Activated CD4-positive, alpha-beta memory T cell treated with anti-CD3 and anti-CD28 coated beads for 36 hours (primary cell): ENCODE measurements at regions of chr2 and their contacts with region 1.

Region 1: DNA sequence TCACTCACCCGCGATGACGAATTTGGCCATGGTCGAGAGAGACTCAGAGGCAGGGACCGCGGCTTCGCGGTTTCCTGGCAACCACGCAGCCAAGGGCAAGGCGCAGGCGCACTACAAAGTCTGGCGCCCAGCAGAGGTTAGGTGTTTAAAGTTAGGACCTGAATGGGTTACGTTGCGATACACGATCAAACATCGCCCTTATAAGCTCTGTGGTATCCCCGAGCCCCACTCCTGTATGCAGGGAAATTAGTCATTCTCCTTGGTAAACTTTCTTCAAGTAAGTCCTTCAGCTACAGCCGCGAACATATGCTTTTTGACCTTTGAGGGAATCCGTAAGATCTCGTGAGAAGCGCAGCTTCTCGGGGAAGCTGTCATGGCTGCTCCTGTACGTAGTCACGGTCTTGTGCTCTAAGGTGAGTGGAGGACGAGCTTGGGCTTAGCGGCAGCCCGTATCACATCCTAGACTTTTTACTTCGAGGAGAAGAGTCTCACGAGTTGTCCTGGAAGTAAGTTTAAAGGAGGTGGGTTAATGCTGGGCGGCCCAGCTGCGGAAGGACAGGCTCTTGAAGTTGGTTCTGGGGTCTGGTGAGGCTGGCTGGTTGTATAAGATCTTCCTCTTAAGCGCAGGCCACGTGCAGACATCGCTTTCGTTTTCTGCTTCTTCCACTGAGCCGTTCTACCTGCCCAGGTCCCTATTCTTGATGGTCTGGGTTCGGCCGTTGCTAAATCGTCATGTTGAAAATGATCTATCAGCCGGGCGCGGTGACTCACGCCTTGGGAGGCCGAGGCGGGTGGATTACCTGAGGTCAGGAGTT is at the starts of genes FASTKD2 and MDH1B:
- DNase-seq: peak; percentile 94
- H3K4me3 Mint-ChIP-seq: peak within 1 kb of the TSS; percentile 93
- H3K27ac Mint-ChIP-seq: peak within 1 kb of the TSS; percentile 96
- H3K4me1 Mint-ChIP-seq: peaks cover 31% of the 10 kb centered on the region
- H3K27me3 Mint-ChIP-seq: no peaks in the 10 kb centered on the region
- total RNA-seq, gene FASTKD2: 31.3 to 32.0 TPM
- total RNA-seq, gene MDH1B: 0.74 to 0.87 TPM

Region 2: DNA sequence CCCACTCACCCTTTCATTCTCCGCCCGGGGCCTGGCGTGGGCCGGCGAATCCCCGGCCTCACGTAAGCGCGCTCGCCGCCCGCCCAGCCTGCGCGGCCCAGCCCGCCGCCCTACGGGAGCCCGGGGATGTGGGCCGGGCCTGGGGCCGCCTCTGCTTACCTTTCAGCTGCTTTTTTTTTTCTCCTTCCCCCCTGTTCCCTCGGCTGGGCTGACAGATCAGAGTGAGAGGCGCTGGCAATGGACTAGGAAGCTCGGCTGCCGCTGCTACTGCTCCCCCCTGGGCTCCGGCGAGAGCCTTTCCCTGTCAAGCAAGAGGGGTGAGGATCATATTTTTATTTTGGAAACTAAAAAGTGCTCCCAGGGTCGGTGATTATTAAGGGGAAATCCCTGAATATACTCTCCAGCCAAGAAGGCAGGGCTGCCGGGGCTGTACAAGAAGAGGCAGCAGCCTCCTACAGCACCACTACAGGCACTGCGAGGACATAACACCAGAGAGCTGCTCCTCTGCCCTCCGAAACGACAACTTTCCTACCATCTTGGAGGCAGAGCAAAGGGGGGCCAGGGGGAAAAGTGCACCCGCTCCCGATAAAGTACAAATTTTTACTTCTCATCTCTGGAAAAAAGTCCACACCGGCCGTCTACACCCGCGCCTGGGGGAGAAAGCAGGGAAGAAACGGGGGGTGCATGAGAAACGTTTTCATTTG is 679.6 kb before region 1 on chr2 and contains the start of gene INO80D:
- CTCF ChIA-PET with region 1: no interaction called
- POLR2A ChIA-PET with region 1: no interaction called
- intact Hi-C with region 1: loop called (anchors 5 kb)
- DNase-seq: peak; percentile 87
- H3K4me3 Mint-ChIP-seq: peak within 1 kb of the TSS; percentile 99
- H3K27ac Mint-ChIP-seq: peak within 1 kb of the TSS; percentile 100
- H3K4me1 Mint-ChIP-seq: peaks cover 14% of the 10 kb centered on the region
- H3K27me3 Mint-ChIP-seq: no peaks in the 10 kb centered on the region
- total RNA-seq, gene INO80D: 14.5 to 15.3 TPM

Region 3: GRCh38 chr2:206159346-206160124 is 605.9 kb before region 1 on chr2 and contains the starts of genes EEF1B2 and NDUFS1:
- CTCF ChIA-PET with region 1: no interaction called
- POLR2A ChIA-PET with region 1: no interaction called
- intact Hi-C with region 1: loop called (anchors 1 kb)
- DNase-seq: peak; percentile 98
- H3K4me3 Mint-ChIP-seq: peak within 1 kb of the TSS; percentile 96
- H3K27ac Mint-ChIP-seq: peak within 1 kb of the TSS; percentile 97
- H3K4me1 Mint-ChIP-seq: peaks cover 52% of the 10 kb centered on the region
- H3K27me3 Mint-ChIP-seq: no peaks in the 10 kb centered on the region
- total RNA-seq, gene EEF1B2: 1,180 to 1,194 TPM
- total RNA-seq, gene NDUFS1: 79.2 to 80.8 TPM

Region 4: DNA sequence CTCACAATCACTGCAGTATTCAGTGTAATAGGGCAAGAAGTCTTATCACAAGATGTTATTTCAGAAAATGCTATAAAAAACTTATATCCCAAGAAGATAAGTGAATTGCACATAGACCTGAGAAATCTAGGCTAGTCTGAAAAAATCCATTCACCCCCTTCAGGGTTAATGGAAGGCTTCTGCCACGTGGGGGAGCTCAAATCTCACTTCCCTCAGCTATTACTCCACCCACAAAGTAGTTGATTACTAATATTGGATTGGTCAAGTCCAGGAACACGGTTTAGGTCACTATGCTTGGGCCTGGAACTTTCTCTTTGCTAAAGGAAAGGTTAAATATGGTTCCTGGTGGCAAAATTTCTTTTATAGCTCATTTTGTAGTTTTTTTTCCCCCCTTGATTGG is 373.3 kb before region 1 on chr2:
- CTCF ChIA-PET with region 1: no interaction called
- POLR2A ChIA-PET with region 1: no interaction called
- intact Hi-C with region 1: loop called (anchors 10 kb)
- DNase-seq: peak; percentile 45
- H3K4me3 Mint-ChIP-seq: no peak overlapping the region
- H3K27ac Mint-ChIP-seq: no peak overlapping the region
- H3K4me1 Mint-ChIP-seq: no peaks in the 10 kb centered on the region
- H3K27me3 Mint-ChIP-seq: no peaks in the 10 kb centered on the region

Region 5: DNA sequence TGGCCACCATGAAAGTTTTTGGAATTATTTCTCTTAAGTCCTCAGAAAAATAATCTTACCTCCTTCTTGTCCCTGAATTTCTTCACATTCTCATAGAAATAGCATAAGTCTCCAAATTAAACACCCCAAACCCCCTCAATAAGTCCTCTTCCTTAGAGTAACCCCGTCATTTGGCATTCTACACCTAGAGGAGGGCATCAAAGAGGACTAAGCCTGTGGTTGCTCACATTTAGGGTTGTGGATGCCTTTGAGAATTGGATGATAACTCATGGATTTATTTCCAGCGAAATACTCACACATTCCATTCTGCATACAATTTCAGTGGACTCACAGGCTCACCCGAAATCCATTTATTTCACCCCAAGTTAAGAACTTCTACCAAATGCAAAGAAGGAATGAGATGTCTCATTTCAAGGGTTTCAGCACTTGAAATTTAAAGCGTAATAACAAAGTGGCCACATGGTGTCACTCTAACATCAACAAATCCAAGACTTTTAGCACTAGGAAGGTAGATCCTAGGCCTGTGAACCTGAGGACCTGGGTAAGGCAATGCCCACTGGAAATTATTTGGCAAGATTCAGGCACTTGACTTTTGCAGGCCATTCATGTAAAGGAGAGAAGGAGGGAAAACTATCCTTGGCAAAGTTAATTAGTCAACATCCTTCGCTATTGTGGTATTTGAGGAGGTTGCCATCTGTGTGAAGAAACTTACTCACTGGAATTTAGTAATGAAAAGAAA is 71.9 kb before region 1 on chr2:
- CTCF ChIA-PET with region 1: no interaction called
- POLR2A ChIA-PET with region 1: no interaction called
- intact Hi-C with region 1: loop called (anchors 5 kb)
- DNase-seq: no peak
- H3K4me3 Mint-ChIP-seq: no peak overlapping the region
- H3K27ac Mint-ChIP-seq: no peak overlapping the region
- H3K4me1 Mint-ChIP-seq: peaks cover 3% of the 10 kb centered on the region
- H3K27me3 Mint-ChIP-seq: no peaks in the 10 kb centered on the region

Region 6: GRCh38 chr2:206736935-206737334 is 28.5 kb before region 1 on chr2:
- CTCF ChIA-PET with region 1: interaction called, 3 read pairs
- POLR2A ChIA-PET with region 1: interaction called, 11 read pairs
- intact Hi-C with region 1: loop called (anchors 1 kb)
- DNase-seq: peak; percentile 9
- H3K4me3 Mint-ChIP-seq: no peak overlapping the region
- H3K27ac Mint-ChIP-seq: no peak overlapping the region
- H3K4me1 Mint-ChIP-seq: peaks cover 3% of the 10 kb centered on the region
- H3K27me3 Mint-ChIP-seq: peaks cover 8% of the 10 kb centered on the region